CD8-positive, alpha-beta memory T cell (primary cell): ENCODE measurements at regions of chr6 and their contacts with region 1.

Region 1: GRCh38 chr6:108260809-108261569 is at the start of gene SNX3:
- DNase-seq: peak; percentile 82 to 94 (median 91)
- H3K4me3 ChIP-seq: peak within 1 kb of the TSS; percentile 89
- H3K4me3 Mint-ChIP-seq: peak within 1 kb of the TSS; percentile 90 to 98 (median 93)
- H3K27ac ChIP-seq: peak within 1 kb of the TSS; percentile 86
- H3K27ac Mint-ChIP-seq: peak within 1 kb of the TSS; percentile 89 to 99 (median 98)
- H3K4me1 ChIP-seq: peaks cover 28% of the 10 kb centered on the region
- H3K4me1 Mint-ChIP-seq: peaks cover 29 to 43% (median 41%) of the 10 kb centered on the region in 3 donors
- H3K27me3 ChIP-seq: no peaks in the 10 kb centered on the region
- H3K27me3 Mint-ChIP-seq: no peaks in the 10 kb centered on the region
- total RNA-seq, gene SNX3: 75.8 to 76.4 TPM

Region 2: GRCh38 chr6:107866606-107867301 is 394.2 kb before region 1 on chr6:
- CTCF ChIA-PET with region 1: no interaction called
- POLR2A ChIA-PET with region 1: no interaction called
- DNase-seq: peak in 2 of 5 donors; percentile 32 to 50
- H3K4me3 ChIP-seq: no peak overlapping the region
- H3K4me3 Mint-ChIP-seq: peak overlapping the region in 1 of 7 donors; percentile 22
- H3K27ac ChIP-seq: no peak overlapping the region
- H3K27ac Mint-ChIP-seq: peak overlapping the region in 1 of 8 donors; percentile 32
- H3K4me1 ChIP-seq: peaks cover 3% of the 10 kb centered on the region
- H3K4me1 Mint-ChIP-seq: peaks cover 2 to 9% (median 6%) of the 10 kb centered on the region in 3 donors
- H3K27me3 ChIP-seq: peaks cover 4% of the 10 kb centered on the region
- H3K27me3 Mint-ChIP-seq: peaks cover 2 to 13% of the 10 kb centered on the region in 2 donors

Region 3: DNA sequence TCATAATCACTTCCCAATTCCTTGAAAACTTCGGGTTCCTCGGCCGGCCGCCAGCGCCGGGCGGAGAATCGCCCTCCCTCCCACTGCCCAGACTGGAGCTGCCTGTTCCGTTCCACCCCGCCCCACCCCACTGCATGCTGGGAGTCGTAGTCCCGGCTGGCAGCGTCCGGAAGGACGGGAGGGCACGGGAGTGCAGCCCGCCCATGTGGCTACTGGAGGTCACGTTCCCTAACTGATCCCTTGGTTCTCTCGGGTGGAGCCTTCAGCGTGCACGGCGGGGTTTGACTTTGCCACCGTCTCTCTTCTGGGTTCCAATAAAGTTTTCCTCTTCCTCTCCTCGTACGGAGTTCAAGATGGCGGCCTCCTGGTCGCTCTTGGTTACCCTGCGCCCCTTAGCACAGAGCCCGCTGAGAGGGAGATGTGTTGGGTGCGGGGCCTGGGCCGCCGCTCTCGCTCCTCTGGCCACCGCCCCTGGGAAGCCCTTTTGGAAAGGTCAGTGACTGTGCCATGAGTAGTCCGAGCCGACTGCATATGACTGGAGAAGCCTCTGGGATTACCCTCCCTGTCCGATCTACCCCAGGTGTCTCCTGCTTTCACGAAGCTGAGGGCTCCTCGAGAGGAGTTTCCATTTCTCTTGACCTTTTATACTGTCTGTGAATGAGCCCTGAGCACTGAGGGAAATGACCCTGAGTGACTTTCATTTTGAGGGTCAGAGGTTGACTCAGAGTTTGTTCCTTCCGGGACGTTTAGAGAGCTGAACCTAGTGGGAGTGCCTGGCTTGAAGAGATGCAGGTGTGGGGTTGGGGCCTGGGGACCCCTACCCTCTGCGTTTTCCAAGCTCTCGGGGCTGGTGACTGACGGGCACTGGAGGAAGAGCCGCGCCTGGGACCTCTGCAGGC is 34.0 kb after region 1 on chr6 and contains the start of gene AFG1L:
- CTCF ChIA-PET with region 1: interaction called, 3 read pairs
- POLR2A ChIA-PET with region 1: interaction called, 21 read pairs
- DNase-seq: peak; percentile 80 to 91 (median 84)
- H3K4me3 ChIP-seq: peak within 1 kb of the TSS; percentile 97
- H3K4me3 Mint-ChIP-seq: peak within 1 kb of the TSS; percentile 94 to 99 (median 97)
- H3K27ac ChIP-seq: peak within 1 kb of the TSS; percentile 90
- H3K27ac Mint-ChIP-seq: peak within 1 kb of the TSS; percentile 98 to 99 (median 98)
- H3K4me1 ChIP-seq: peaks cover 13% of the 10 kb centered on the region
- H3K4me1 Mint-ChIP-seq: peaks cover 21 to 31% (median 23%) of the 10 kb centered on the region in 3 donors
- H3K27me3 ChIP-seq: no peaks in the 10 kb centered on the region
- H3K27me3 Mint-ChIP-seq: peaks cover 0 to 2% of the 10 kb centered on the region in 2 donors
- total RNA-seq, gene AFG1L: 4.4 to 5.3 TPM

Region 4: DNA sequence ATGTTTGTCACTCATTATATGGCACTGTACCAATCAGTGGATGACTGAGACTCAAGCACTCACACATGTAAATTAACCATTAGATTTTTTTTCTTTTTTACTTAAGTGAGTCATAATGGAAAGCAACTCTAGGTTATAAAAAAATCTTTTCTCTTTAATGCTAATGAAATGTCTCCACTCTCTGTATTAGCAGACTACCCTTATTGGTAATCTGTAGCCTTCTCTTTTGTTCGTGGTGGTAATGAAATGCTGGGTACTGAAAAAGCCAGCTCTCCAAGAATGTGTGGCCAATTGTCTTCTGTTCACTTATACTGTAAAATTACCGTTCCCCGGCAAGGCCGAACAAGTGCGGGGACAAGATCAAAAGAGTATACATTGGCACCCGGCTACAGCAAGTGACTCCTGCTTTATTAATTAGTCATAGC is 102.9 kb after region 1 on chr6:
- CTCF ChIA-PET with region 1: no interaction called
- POLR2A ChIA-PET with region 1: no interaction called
- DNase-seq: no peak
- H3K4me3 ChIP-seq: no peak overlapping the region
- H3K4me3 Mint-ChIP-seq: peak overlapping the region in 1 of 7 donors; percentile 14
- H3K27ac ChIP-seq: no peak overlapping the region
- H3K27ac Mint-ChIP-seq: peak overlapping the region in 1 of 8 donors; percentile 27
- H3K4me1 ChIP-seq: no peaks in the 10 kb centered on the region
- H3K4me1 Mint-ChIP-seq: peaks cover 0 to 4% (median 0%) of the 10 kb centered on the region in 3 donors
- H3K27me3 ChIP-seq: no peaks in the 10 kb centered on the region
- H3K27me3 Mint-ChIP-seq: no peaks in the 10 kb centered on the region